ENCODE measurements at regions of chr17 and their contacts with region 1.

Region 1: GRCh38 chr17:29180034-29180787 is at the start of gene MYO18A:
- DNase-seq: peak; percentile 70 to 81 (median 73)
- H3K4me3 ChIP-seq: no peak within 1 kb of the TSS
- H3K4me3 Mint-ChIP-seq: peak within 1 kb of the TSS; percentile 59 to 71 (median 66)
- H3K27ac ChIP-seq: peak within 1 kb of the TSS; percentile 37
- H3K27ac Mint-ChIP-seq: peak within 1 kb of the TSS in 2 of 7 donors; percentile 46 to 79
- H3K4me1 ChIP-seq: peaks cover 22% of the 10 kb centered on the region
- H3K4me1 Mint-ChIP-seq: peaks cover 11 to 32% (median 20%) of the 10 kb centered on the region in 4 donors
- H3K27me3 ChIP-seq: no peaks in the 10 kb centered on the region
- H3K27me3 Mint-ChIP-seq: no peaks in the 10 kb centered on the region
- total RNA-seq, gene MYO18A: 134 to 136 TPM

Region 2: GRCh38 chr17:28967221-28968140 is 212.7 kb before region 1 on chr17:
- CTCF ChIA-PET with region 1: interaction called, 10 read pairs
- POLR2A ChIA-PET with region 1: no interaction called
- intact Hi-C with region 1: no loop called
- DNase-seq: peak in 1 of 5 donors; percentile 25
- H3K4me3 ChIP-seq: no peak overlapping the region
- H3K4me3 Mint-ChIP-seq: no peak overlapping the region
- H3K27ac ChIP-seq: no peak overlapping the region
- H3K27ac Mint-ChIP-seq: peak overlapping the region in 2 of 7 donors; percentile 19 to 39
- H3K4me1 ChIP-seq: no peaks in the 10 kb centered on the region
- H3K4me1 Mint-ChIP-seq: peaks cover 0 to 3% (median 0%) of the 10 kb centered on the region in 4 donors
- H3K27me3 ChIP-seq: no peaks in the 10 kb centered on the region
- H3K27me3 Mint-ChIP-seq: peaks cover 8 to 14% of the 10 kb centered on the region in 2 donors

Region 3: DNA sequence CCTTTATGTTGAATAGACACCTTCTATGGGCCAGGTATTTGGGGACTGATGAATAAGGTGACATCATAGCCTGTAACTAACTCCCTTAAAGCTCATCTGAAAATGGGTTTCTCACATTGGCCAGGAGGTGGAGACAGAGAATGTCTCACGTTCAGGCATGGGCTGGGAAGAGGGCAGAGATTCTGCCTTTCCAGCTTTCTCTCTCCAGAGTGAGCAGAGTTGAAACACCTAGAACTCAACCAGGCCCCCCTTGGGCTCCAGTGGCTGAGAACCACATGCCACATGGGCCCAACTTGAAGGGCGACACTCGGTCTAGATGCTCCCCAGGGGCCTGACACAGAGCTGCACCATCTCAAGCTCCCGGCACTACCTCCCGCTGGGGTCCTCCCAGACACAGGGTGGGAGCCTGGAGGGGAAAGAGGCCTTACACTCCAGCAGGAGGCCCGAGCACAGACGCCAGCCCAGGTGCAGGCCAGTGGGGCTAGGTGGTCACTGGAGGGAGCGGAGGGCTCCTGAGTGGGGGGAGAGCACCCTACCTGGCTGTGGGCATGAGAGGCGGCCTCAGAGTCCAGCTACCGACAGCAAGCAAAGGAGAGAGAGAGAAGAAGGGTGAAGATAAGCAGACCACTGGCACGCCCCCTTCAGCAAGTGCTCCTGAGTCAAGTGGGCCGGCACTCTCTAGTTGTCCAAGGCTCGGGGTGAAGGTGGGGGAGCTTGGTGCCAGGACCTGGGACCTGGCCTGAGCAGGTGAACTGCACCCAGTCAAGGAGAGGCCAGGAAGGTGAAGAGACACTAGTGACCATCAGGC is 55.9 kb before region 1 on chr17:
- CTCF ChIA-PET with region 1: interaction called, 93 read pairs
- POLR2A ChIA-PET with region 1: interaction called, 15 read pairs
- intact Hi-C with region 1: loop called (anchors 1 kb)
- DNase-seq: peak; percentile 37 to 60 (median 42)
- H3K4me3 ChIP-seq: no peak overlapping the region
- H3K4me3 Mint-ChIP-seq: no peak overlapping the region
- H3K27ac ChIP-seq: no peak overlapping the region
- H3K27ac Mint-ChIP-seq: no peak overlapping the region
- H3K4me1 ChIP-seq: peaks cover 7% of the 10 kb centered on the region
- H3K4me1 Mint-ChIP-seq: peaks cover 6 to 12% (median 7%) of the 10 kb centered on the region in 4 donors
- H3K27me3 ChIP-seq: no peaks in the 10 kb centered on the region
- H3K27me3 Mint-ChIP-seq: no peaks in the 10 kb centered on the region

Region 4: GRCh38 chr17:29140051-29140621 is 40.1 kb before region 1 on chr17:
- CTCF ChIA-PET with region 1: interaction called, 465 read pairs
- POLR2A ChIA-PET with region 1: interaction called, 24 read pairs
- intact Hi-C with region 1: loop called (anchors 1 kb)
- DNase-seq: peak; percentile 65 to 92 (median 69)
- H3K4me3 ChIP-seq: peak overlapping the region; percentile 55 to 72
- H3K4me3 Mint-ChIP-seq: peak overlapping the region; percentile 90 to 98 (median 92)
- H3K27ac ChIP-seq: peak overlapping the region; percentile 81
- H3K27ac Mint-ChIP-seq: peak overlapping the region; percentile 91 to 99 (median 97)
- H3K4me1 ChIP-seq: peaks cover 69% of the 10 kb centered on the region
- H3K4me1 Mint-ChIP-seq: peaks cover 49 to 82% (median 63%) of the 10 kb centered on the region in 4 donors
- H3K27me3 ChIP-seq: no peaks in the 10 kb centered on the region
- H3K27me3 Mint-ChIP-seq: no peaks in the 10 kb centered on the region

Region 5: GRCh38 chr17:29155227-29155965 is 24.8 kb before region 1 on chr17:
- CTCF ChIA-PET with region 1: interaction called, 465 read pairs
- POLR2A ChIA-PET with region 1: interaction called, 70 read pairs
- intact Hi-C with region 1: no loop called
- DNase-seq: peak in 4 of 5 donors; percentile 24 to 69 (median 28)
- H3K4me3 ChIP-seq: peak overlapping the region in 1 of 2 donors; percentile 11
- H3K4me3 Mint-ChIP-seq: peak overlapping the region; percentile 54 to 81 (median 74)
- H3K27ac ChIP-seq: peak overlapping the region; percentile 55
- H3K27ac Mint-ChIP-seq: peak overlapping the region; percentile 75 to 91 (median 89)
- H3K4me1 ChIP-seq: peaks cover 35% of the 10 kb centered on the region
- H3K4me1 Mint-ChIP-seq: peaks cover 17 to 62% (median 33%) of the 10 kb centered on the region in 4 donors
- H3K27me3 ChIP-seq: no peaks in the 10 kb centered on the region
- H3K27me3 Mint-ChIP-seq: no peaks in the 10 kb centered on the region

Region 6: GRCh38 chr17:29169806-29170591 is 10.2 kb before region 1 on chr17:
- CTCF ChIA-PET with region 1: interaction called, 20 read pairs
- POLR2A ChIA-PET with region 1: interaction called, 3 read pairs
- intact Hi-C with region 1: no loop called
- DNase-seq: no peak
- H3K4me3 ChIP-seq: no peak overlapping the region
- H3K4me3 Mint-ChIP-seq: no peak overlapping the region
- H3K27ac ChIP-seq: no peak overlapping the region
- H3K27ac Mint-ChIP-seq: no peak overlapping the region
- H3K4me1 ChIP-seq: no peaks in the 10 kb centered on the region
- H3K4me1 Mint-ChIP-seq: peaks cover 0 to under 1% (median 0%) of the 10 kb centered on the region in 4 donors
- H3K27me3 ChIP-seq: no peaks in the 10 kb centered on the region
- H3K27me3 Mint-ChIP-seq: no peaks in the 10 kb centered on the region

Region 7: GRCh38 chr17:29219378-29220047 is 39.3 kb after region 1 on chr17:
- CTCF ChIA-PET with region 1: interaction called, 10 read pairs
- POLR2A ChIA-PET with region 1: no interaction called
- intact Hi-C with region 1: no loop called
- DNase-seq: peak; percentile 60 to 67 (median 64)
- H3K4me3 ChIP-seq: no peak overlapping the region
- H3K4me3 Mint-ChIP-seq: no peak overlapping the region
- H3K27ac ChIP-seq: no peak overlapping the region
- H3K27ac Mint-ChIP-seq: peak overlapping the region in 1 of 7 donors; percentile 8
- H3K4me1 ChIP-seq: no peaks in the 10 kb centered on the region
- H3K4me1 Mint-ChIP-seq: peaks cover 4 to 9% (median 7%) of the 10 kb centered on the region in 4 donors
- H3K27me3 ChIP-seq: no peaks in the 10 kb centered on the region
- H3K27me3 Mint-ChIP-seq: peaks cover 0 to 2% of the 10 kb centered on the region in 2 donors